Activated naive CD4-positive, alpha-beta T cell treated with anti-CD3 and anti-CD28 coated beads, Interleukin-2, amount 10 ng/mL, durations not matched to agents 7 days and 5 days (primary cell): ENCODE measurements at regions of chr1 and their contacts with region 1.

Region 1: GRCh38 chr1:11838349-11839272 is 9.0 kb downstream of the NPPA start:
- DNase-seq: peak; percentile 82
- H3K4me3 Mint-ChIP-seq: no peak overlapping the region
- H3K27ac Mint-ChIP-seq: no peak overlapping the region
- H3K4me1 Mint-ChIP-seq: peaks cover 3% of the 10 kb centered on the region
- H3K27me3 Mint-ChIP-seq: no peaks in the 10 kb centered on the region

Region 2: DNA sequence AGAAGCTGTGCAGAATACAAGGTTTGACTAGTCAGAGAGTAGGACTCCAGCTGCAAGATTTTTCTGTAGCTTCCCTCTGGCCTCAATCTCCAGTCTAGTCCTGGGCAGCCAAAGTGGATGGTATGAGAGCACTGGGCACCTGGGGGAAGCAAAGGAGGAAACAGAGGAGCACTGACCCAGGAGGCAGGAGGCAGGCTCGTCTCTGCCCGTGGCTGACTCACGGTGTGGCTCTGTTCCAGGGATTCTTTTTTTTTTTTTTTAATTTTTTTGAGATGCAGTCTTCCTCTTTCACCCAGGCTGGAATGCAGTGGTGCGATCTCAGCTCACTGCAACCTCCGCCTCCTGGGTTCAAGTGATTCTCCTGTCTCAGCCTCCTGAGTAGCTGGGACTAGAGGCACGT is 24.3 kb after region 1 on chr1:
- CTCF ChIA-PET with region 1: no interaction called
- DNase-seq: no peak
- H3K4me3 Mint-ChIP-seq: no peak overlapping the region
- H3K27ac Mint-ChIP-seq: no peak overlapping the region
- H3K4me1 Mint-ChIP-seq: peaks cover under 1% of the 10 kb centered on the region
- H3K27me3 Mint-ChIP-seq: peaks cover 85% of the 10 kb centered on the region

Region 3: GRCh38 chr1:11893907-11894251 is 55.3 kb after region 1 on chr1:
- CTCF ChIA-PET with region 1: interaction called, 36 read pairs
- DNase-seq: peak; percentile 81
- H3K4me3 Mint-ChIP-seq: no peak overlapping the region
- H3K27ac Mint-ChIP-seq: no peak overlapping the region
- H3K4me1 Mint-ChIP-seq: no peaks in the 10 kb centered on the region
- H3K27me3 Mint-ChIP-seq: peaks cover 89% of the 10 kb centered on the region